ENCODE measurements at regions of chr11 and their contacts with region 1.

Region 1: GRCh38 chr11:40099426-40100169 is 1359.9 kb downstream of the LRRC4C start:
- DNase-seq: no peak
- ATAC-seq: no peak
- H3K4me3 ChIP-seq: no peak overlapping the region
- H3K27ac ChIP-seq: no peak overlapping the region
- H3K4me1 ChIP-seq: no peaks in the 10 kb centered on the region
- H3K27me3 ChIP-seq: no peaks in the 10 kb centered on the region

Region 2: DNA sequence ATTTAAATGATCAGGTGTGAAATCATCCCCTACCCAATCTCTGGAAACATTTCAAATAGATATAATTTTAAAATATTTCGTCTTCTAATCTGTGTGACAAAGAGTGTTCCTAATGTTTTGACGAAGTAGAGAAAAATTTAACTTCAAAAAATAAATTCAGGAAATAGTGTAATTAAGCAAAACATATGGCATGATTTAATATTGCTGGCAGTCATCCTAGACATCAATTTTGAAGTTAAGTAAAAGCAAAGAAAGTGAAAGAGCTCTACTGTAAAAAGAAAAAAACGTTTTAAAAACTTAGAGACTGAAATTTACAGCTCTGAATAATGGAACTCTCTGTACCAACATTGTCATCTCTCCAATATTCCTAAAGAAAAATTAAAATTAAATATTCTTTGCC is 297.5 kb after region 1 on chr11:
- intact Hi-C with region 1: loop called in 1 of 2 experiments (anchors 5 kb)
- DNase-seq: no peak
- ATAC-seq: no peak
- H3K4me3 ChIP-seq: no peak overlapping the region
- H3K27ac ChIP-seq: no peak overlapping the region
- H3K4me1 ChIP-seq: no peaks in the 10 kb centered on the region
- H3K27me3 ChIP-seq: no peaks in the 10 kb centered on the region

Measured in aorta (tissue), 5 donors.